Naive thymus-derived CD4-positive, alpha-beta T cell (primary cell): ENCODE measurements at regions of chr1 and their contacts with region 1.

Region 1: GRCh38 chr1:209692745-209693504 is 11.7 kb upstream of the HSD11B1 start:
- DNase-seq: peak; percentile 36 to 66 (median 57)
- ATAC-seq: peak; percentile 75
- H3K4me3 ChIP-seq: no peak overlapping the region
- H3K4me3 Mint-ChIP-seq: no peak overlapping the region
- H3K27ac ChIP-seq: no peak overlapping the region
- H3K27ac Mint-ChIP-seq: peak overlapping the region in 5 of 9 donors; percentile 14 to 74 (median 37)
- H3K4me1 ChIP-seq: peaks cover 0 to 19% of the 10 kb centered on the region in 2 donors
- H3K4me1 Mint-ChIP-seq: peaks cover 16 to 48% (median 30%) of the 10 kb centered on the region in 7 donors
- H3K27me3 ChIP-seq: no peaks in the 10 kb centered on the region
- H3K27me3 Mint-ChIP-seq: no peaks in the 10 kb centered on the region

Region 2: DNA sequence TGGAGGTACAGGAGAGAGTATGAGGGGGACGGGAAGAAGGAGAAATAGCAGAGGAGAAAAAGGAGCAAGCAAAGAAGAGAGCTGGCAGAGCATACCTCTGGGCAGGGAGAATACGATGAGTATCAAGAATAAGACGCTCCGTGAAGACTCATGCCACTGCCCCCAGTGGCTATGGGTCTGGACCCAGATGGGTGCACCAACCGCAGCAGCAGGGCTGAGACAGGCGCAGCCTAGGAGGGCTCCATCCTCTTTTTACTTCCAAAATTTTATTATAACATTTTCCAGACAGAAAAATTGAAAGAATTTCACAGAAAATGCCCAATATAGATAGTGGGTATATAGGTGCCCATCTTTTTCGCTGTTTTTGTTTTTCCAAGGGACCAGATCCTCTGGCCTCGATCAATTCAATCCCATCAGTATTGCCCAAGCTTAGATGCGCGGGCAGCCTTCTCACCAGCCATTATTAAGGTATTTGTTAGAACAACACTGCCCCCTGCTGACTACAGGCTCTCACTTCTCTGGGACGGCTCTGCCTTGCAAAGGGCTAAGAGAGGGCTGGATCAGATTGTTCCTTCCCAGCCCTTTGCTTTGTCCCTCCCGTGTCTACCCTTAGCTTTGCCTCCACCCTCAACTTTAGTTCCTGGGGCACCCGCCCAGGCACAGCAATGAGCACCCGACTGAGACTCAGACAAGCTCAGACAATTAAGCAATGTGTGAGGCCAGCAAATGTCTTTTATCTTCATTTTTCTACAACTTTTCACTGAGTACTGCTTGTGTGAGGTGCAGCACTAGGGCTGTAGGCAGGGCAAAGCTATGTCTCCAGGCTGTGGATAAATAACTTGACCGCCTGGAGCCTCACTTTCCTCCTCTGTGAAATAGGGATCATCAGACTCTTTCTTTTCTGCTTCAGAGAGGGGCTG is 126.9 kb before region 1 on chr1:
- CTCF ChIA-PET with region 1: interaction called, 36 read pairs
- POLR2A ChIA-PET with region 1: no interaction called
- intact Hi-C with region 1: loop called (anchors 1 kb)
- DNase-seq: peak; percentile 31 to 73 (median 67)
- ATAC-seq: peak; percentile 84
- H3K4me3 ChIP-seq: no peak overlapping the region
- H3K4me3 Mint-ChIP-seq: peak overlapping the region in 1 of 10 donors; percentile 29
- H3K27ac ChIP-seq: no peak overlapping the region
- H3K27ac Mint-ChIP-seq: peak overlapping the region in 1 of 9 donors; percentile 15
- H3K4me1 ChIP-seq: peaks cover 0 to 11% of the 10 kb centered on the region in 2 donors
- H3K4me1 Mint-ChIP-seq: peaks cover 6 to 26% (median 11%) of the 10 kb centered on the region in 7 donors
- H3K27me3 ChIP-seq: no peaks in the 10 kb centered on the region
- H3K27me3 Mint-ChIP-seq: peaks cover 17 to 47% (median 38%) of the 10 kb centered on the region in 5 donors

Region 3: GRCh38 chr1:209601809-209602657 is 90.9 kb before region 1 on chr1:
- CTCF ChIA-PET with region 1: interaction called, 11 read pairs
- POLR2A ChIA-PET with region 1: no interaction called
- intact Hi-C with region 1: loop called (anchors 1 kb)
- DNase-seq: peak in 6 of 9 donors; percentile 23 to 44 (median 34)
- ATAC-seq: peak; percentile 83
- H3K4me3 ChIP-seq: no peak overlapping the region
- H3K4me3 Mint-ChIP-seq: no peak overlapping the region
- H3K27ac ChIP-seq: no peak overlapping the region
- H3K27ac Mint-ChIP-seq: no peak overlapping the region
- H3K4me1 ChIP-seq: no peaks in the 10 kb centered on the region
- H3K4me1 Mint-ChIP-seq: peaks cover 0 to 4% (median 0%) of the 10 kb centered on the region in 7 donors
- H3K27me3 ChIP-seq: no peaks in the 10 kb centered on the region
- H3K27me3 Mint-ChIP-seq: peaks cover 5 to 39% (median 16%) of the 10 kb centered on the region in 5 donors

Region 4: DNA sequence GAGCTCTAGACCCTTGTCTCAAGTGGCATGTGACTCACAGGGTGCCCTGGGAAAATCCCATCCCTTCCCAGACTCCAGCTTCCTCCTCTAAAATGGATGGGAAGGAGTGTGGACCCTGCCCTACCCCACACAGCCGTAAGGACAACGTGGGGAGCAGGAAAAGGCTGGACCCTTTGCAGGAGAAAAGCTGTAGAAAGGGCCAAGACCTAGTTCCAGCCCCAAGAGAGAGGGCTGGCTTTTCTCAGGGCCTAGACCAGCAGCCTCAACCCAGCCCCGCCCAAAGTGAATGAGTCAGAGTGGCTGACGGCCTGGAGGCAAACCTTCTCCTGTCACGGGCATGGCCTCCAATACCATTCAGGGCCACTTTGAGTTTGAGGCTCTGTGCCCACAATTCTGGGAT is 41.8 kb before region 1 on chr1:
- CTCF ChIA-PET with region 1: interaction called, 5 read pairs
- POLR2A ChIA-PET with region 1: no interaction called
- intact Hi-C with region 1: loop called (anchors 2 kb)
- DNase-seq: peak in 1 of 9 donors; percentile 72
- ATAC-seq: peak; percentile 82
- H3K4me3 ChIP-seq: no peak overlapping the region
- H3K4me3 Mint-ChIP-seq: peak overlapping the region in 1 of 10 donors; percentile 50
- H3K27ac ChIP-seq: no peak overlapping the region
- H3K27ac Mint-ChIP-seq: peak overlapping the region in 2 of 9 donors; percentile 12 to 88
- H3K4me1 ChIP-seq: no peaks in the 10 kb centered on the region
- H3K4me1 Mint-ChIP-seq: peaks cover 11 to 69% (median 16%) of the 10 kb centered on the region in 7 donors
- H3K27me3 ChIP-seq: no peaks in the 10 kb centered on the region
- H3K27me3 Mint-ChIP-seq: no peaks in the 10 kb centered on the region

Region 5: GRCh38 chr1:209714338-209714737 is 21.4 kb after region 1 on chr1:
- CTCF ChIA-PET with region 1: no interaction called
- POLR2A ChIA-PET with region 1: no interaction called
- intact Hi-C with region 1: loop called in 1 of 2 experiments (anchors 2 kb)
- DNase-seq: no peak
- ATAC-seq: no peak
- H3K4me3 ChIP-seq: no peak overlapping the region
- H3K4me3 Mint-ChIP-seq: peak overlapping the region in 1 of 10 donors; percentile 44
- H3K27ac ChIP-seq: no peak overlapping the region
- H3K27ac Mint-ChIP-seq: peak overlapping the region in 2 of 9 donors; percentile 20 to 66
- H3K4me1 ChIP-seq: no peaks in the 10 kb centered on the region
- H3K4me1 Mint-ChIP-seq: peaks cover 0 to 45% (median 11%) of the 10 kb centered on the region in 7 donors
- H3K27me3 ChIP-seq: no peaks in the 10 kb centered on the region
- H3K27me3 Mint-ChIP-seq: no peaks in the 10 kb centered on the region

Region 6: GRCh38 chr1:210053126-210053525 is 360.2 kb after region 1 on chr1:
- CTCF ChIA-PET with region 1: no interaction called
- POLR2A ChIA-PET with region 1: no interaction called
- intact Hi-C with region 1: no loop called
- DNase-seq: no peak
- ATAC-seq: no peak
- H3K4me3 ChIP-seq: no peak overlapping the region
- H3K4me3 Mint-ChIP-seq: no peak overlapping the region
- H3K27ac ChIP-seq: no peak overlapping the region
- H3K27ac Mint-ChIP-seq: no peak overlapping the region
- H3K4me1 ChIP-seq: no peaks in the 10 kb centered on the region
- H3K4me1 Mint-ChIP-seq: no peaks in the 10 kb centered on the region
- H3K27me3 ChIP-seq: no peaks in the 10 kb centered on the region
- H3K27me3 Mint-ChIP-seq: peaks cover 4 to 21% (median 10%) of the 10 kb centered on the region in 5 donors